ENCODE measurements at regions of chr5 and their contacts with region 1.

Region 1: GRCh38 chr5:80093796-80094195 is 58.6 kb downstream of the THBS4 start:
- DNase-seq: no peak
- ATAC-seq: no peak

Region 2: DNA sequence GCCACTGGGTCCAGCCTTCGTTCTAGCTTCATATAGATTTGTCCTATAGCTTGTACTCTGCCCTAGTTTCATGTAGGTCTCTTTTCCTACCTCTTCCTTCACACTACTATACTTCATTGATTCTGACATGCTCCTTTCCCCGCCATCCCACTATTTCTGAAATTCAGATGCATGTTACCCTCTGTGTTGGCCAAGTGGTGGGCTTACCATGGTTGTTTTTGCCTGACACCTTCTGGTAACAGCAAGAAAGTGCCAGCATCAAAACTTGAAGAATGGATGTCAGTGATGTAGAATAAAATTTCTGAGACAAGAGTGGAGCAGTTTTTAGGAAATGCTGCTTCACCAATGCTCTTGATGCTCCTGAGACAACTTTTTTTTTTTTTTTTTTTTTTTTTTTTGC is 181.6 kb after region 1 on chr5:
- intact Hi-C with region 1: loop called (anchors 10 kb)
- DNase-seq: no peak
- ATAC-seq: no peak

Region 3: GRCh38 chr5:80308526-80308925 is 214.7 kb after region 1 on chr5:
- intact Hi-C with region 1: loop called (anchors 1 to 5 kb)
- DNase-seq: no peak
- ATAC-seq: no peak